ENCODE measurements at regions of chr2 and their contacts with region 1.

Region 1: GRCh38 chr2:112254466-112255239 is at the start of gene ZC3H8:
- DNase-seq: peak; percentile 75
- ATAC-seq: peak; percentile 99
- H3K4me3 ChIP-seq: peak within 1 kb of the TSS; percentile 57
- H3K27ac ChIP-seq: peak within 1 kb of the TSS; percentile 15; the same call in 1 of the 2 replicates
- H3K4me1 ChIP-seq: no peaks in the 10 kb centered on the region
- H3K27me3 ChIP-seq: no peaks in the 10 kb centered on the region
- CTCF ChIP-seq: no peak
- POLR2A ChIP-seq: no peak; the same call in 1 of the 2 replicates
- RAD21 ChIP-seq: no peak
- total RNA-seq, gene ZC3H8: 0.18 and 1.7 TPM in 2 replicates

Region 2: DNA sequence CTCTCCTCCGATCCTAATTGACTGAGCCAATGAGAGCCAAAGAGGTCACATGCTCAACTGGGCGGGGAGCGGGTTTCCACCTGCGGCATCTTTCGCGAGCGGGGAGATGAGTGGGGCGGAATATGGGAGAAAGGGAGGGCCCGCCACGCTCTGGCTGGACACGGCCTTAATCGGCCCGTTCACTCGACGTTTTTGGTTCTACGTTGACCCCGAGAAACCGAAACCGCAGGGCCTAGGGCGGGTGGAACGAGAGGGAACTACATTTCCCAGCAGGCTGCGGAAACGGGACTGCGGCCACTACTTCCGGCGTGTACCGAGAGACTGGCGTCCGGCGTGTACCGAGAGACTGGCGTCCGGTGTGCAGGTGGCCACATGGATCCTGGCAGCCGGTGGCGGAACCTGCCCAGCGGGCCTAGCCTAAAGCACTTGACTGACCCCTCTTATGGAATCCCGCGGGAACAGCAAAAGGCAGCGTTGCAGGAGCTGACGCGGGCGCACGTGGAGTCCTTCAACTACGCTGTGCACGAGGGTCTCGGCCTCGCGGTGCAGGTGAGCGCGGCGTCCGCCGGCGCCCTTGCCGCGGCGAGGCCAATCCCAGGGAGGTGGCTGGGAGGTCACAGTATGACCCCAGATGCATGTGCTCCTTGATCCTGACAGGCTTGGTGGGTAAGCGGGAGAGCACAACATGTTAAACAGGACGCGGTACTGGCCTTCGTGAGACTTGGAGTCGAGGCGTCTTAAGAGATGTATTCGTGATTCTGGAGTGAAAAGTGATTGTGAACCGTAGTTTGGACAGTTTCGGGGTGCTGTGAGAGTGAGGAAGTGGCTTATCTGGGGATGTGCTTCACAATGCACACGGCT is 287.7 kb after region 1 on chr2 and contains the start of gene POLR1B:
- CTCF ChIA-PET with region 1: interaction called, 3 read pairs
- POLR2A ChIA-PET with region 1: no interaction called
- dilution Hi-C with region 1: no loop called
- in situ Hi-C with region 1: no loop called
- intact Hi-C with region 1: loop called (anchors 5 kb)
- DNase-seq: peak; percentile 78
- ATAC-seq: peak; percentile 87
- H3K4me3 ChIP-seq: peak within 1 kb of the TSS; percentile 76
- H3K27ac ChIP-seq: peak within 1 kb of the TSS; percentile 80
- H3K4me1 ChIP-seq: no peaks in the 10 kb centered on the region
- H3K27me3 ChIP-seq: no peaks in the 10 kb centered on the region
- CTCF ChIP-seq: no peak
- POLR2A ChIP-seq: no peak
- RAD21 ChIP-seq: no peak
- total RNA-seq, gene POLR1B: 22.8 and 24.6 TPM in 2 replicates